Activated CD4-positive, alpha-beta T cell treated with anti-CD3 and anti-CD28 coated beads, Interleukin-2, amount 10 ng/mL, durations not matched to agents 7 days and 5 days (primary cell): ENCODE measurements at regions of chr1 and their contacts with region 1.

Region 1: GRCh38 chr1:214328770-214329469 is 48.0 kb downstream of the SMYD2 start:
- DNase-seq: peak; percentile 83
- H3K4me3 Mint-ChIP-seq: no peak overlapping the region
- H3K27ac Mint-ChIP-seq: no peak overlapping the region
- H3K4me1 Mint-ChIP-seq: peaks cover 9% of the 10 kb centered on the region
- H3K27me3 Mint-ChIP-seq: no peaks in the 10 kb centered on the region

Region 2: DNA sequence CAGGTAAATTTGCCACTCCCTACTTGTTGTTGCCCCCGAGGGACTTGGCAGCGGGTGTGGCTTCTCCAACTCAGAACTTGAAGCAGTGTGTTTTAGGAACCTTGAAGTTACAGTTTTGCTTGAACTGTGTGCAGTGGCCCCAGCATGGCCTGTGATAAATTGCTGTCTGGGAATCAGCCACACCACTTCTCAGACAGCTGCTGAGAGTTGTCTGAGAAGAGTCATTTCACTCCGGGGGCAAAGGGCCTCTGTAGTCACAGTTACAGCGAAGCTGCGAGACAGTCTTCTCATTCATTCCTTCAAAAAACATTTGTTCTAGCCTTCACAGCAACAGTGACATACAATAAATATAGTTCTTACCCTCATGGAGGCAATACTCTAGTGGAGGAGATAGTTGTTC is 270.8 kb before region 1 on chr1:
- CTCF ChIA-PET with region 1: no interaction called
- POLR2A ChIA-PET with region 1: no interaction called
- DNase-seq: no peak
- H3K4me3 Mint-ChIP-seq: no peak overlapping the region
- H3K27ac Mint-ChIP-seq: no peak overlapping the region
- H3K4me1 Mint-ChIP-seq: no peaks in the 10 kb centered on the region
- H3K27me3 Mint-ChIP-seq: no peaks in the 10 kb centered on the region

Region 3: DNA sequence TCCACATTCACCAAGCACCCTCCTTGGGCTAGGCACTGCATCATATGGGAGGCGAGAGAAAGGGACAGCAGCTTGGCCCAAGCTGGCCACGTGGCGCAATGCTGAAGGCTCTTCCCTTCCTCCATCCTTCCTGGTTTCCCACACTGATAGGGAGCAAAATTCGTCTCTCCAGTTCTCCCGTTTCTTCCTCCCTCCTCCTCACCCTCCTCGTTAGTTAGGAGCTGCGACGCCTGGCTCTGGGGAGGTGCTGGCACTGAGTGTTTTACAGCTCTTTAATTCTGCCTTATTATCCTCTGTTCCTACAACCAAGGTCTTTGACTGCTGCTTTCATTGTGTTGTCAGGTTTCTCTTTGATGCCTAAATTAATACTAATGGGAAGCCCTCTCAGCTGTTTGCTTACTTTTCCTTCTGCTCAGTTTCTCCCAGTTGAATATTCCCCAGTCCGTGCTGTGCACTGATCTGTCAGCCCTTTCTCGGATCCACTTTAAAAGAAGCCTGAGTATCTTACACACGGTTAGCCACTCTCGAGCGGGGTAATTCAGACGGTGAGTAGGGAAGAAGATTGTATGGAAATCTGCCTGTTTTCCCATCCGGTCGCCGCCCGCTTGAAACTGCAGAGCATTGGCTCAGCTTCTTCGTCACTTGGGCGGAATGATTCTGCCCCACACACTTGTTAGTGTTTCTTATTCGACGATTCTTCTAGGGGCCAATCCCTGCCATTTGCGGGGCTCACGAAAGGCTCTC is 104.1 kb before region 1 on chr1:
- CTCF ChIA-PET with region 1: no interaction called
- POLR2A ChIA-PET with region 1: no interaction called
- DNase-seq: no peak
- H3K4me3 Mint-ChIP-seq: no peak overlapping the region
- H3K27ac Mint-ChIP-seq: no peak overlapping the region
- H3K4me1 Mint-ChIP-seq: peaks cover 4% of the 10 kb centered on the region
- H3K27me3 Mint-ChIP-seq: peaks cover 36% of the 10 kb centered on the region

Region 4: DNA sequence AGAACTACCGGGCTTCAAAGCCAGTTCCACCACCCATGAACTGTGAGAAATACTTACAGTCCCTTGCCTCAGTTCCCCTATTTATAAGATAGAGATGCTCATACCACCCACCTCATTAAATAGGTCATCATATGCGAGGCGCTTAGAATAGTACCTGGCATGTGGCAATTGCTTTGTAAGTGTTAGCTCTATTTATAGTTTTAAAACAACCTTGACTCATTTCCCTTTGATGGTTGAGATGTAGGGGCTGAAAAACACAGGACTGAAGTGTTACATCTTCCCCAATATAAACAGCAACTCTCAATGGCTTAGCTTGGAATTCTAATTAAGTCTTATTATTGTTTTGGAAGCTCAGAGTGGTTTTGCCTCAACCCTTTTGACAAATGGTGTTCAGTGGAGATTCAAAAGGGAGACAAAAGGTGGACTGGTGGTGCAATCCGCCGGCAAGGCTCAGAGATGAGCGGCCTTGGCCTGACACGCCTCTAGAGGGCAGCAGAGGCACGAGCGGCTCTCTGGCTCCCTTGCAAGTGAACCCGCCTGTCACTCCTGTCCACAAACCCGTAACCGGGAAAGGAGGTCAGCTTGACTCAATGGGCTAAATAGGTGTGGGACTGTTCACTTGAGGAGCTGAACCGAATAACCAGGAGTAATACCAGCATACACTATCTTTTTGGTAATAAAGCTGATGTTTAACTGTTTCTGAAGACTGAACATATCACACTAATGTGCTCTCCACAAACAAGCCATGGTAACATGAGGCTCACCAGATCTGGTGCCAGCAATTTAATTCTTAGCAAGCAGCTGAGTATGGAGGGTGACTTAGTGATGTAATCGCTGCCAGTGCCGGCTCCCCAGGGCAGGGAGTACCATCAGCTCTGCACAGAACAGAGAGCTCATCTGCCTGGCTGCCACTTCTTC is 67.5 kb before region 1 on chr1:
- CTCF ChIA-PET with region 1: interaction called, 145 read pairs
- POLR2A ChIA-PET with region 1: no interaction called
- DNase-seq: peak; percentile 86
- H3K4me3 Mint-ChIP-seq: no peak overlapping the region
- H3K27ac Mint-ChIP-seq: no peak overlapping the region
- H3K4me1 Mint-ChIP-seq: peaks cover 14% of the 10 kb centered on the region
- H3K27me3 Mint-ChIP-seq: peaks cover 57% of the 10 kb centered on the region

Region 5: GRCh38 chr1:214276786-214277345 is 52.1 kb before region 1 on chr1:
- CTCF ChIA-PET with region 1: interaction called, 14 read pairs
- POLR2A ChIA-PET with region 1: no interaction called
- DNase-seq: no peak
- H3K4me3 Mint-ChIP-seq: no peak overlapping the region
- H3K27ac Mint-ChIP-seq: no peak overlapping the region
- H3K4me1 Mint-ChIP-seq: peaks cover 13% of the 10 kb centered on the region
- H3K27me3 Mint-ChIP-seq: peaks cover 13% of the 10 kb centered on the region

Region 6: GRCh38 chr1:214316593-214316992 is 12.3 kb before region 1 on chr1:
- CTCF ChIA-PET with region 1: interaction called, 11 read pairs
- POLR2A ChIA-PET with region 1: no interaction called
- DNase-seq: no peak
- H3K4me3 Mint-ChIP-seq: no peak overlapping the region
- H3K27ac Mint-ChIP-seq: no peak overlapping the region
- H3K4me1 Mint-ChIP-seq: peaks cover 10% of the 10 kb centered on the region
- H3K27me3 Mint-ChIP-seq: no peaks in the 10 kb centered on the region

Region 7: DNA sequence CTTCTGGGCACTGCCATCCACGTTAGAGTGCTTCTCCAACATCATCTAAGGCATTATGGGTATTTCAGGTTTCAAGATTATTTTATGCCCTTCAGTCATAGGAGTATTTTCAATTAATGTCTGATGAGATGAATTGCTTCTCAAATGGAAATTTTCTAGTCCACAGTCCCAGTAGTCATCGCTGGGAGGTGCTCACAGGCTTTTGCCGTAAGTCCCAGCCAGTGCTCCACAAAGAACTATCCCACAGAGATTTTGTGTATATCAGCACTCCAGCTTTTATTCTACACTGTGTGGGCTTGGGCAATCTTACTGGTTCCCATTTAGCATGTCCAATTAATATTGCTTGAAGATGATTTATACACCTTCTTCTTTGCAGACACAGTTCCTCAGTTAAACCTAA is 13.0 kb after region 1 on chr1:
- CTCF ChIA-PET with region 1: interaction called, 20 read pairs
- POLR2A ChIA-PET with region 1: no interaction called
- DNase-seq: no peak
- H3K4me3 Mint-ChIP-seq: no peak overlapping the region
- H3K27ac Mint-ChIP-seq: no peak overlapping the region
- H3K4me1 Mint-ChIP-seq: peaks cover 5% of the 10 kb centered on the region
- H3K27me3 Mint-ChIP-seq: no peaks in the 10 kb centered on the region

Region 8: DNA sequence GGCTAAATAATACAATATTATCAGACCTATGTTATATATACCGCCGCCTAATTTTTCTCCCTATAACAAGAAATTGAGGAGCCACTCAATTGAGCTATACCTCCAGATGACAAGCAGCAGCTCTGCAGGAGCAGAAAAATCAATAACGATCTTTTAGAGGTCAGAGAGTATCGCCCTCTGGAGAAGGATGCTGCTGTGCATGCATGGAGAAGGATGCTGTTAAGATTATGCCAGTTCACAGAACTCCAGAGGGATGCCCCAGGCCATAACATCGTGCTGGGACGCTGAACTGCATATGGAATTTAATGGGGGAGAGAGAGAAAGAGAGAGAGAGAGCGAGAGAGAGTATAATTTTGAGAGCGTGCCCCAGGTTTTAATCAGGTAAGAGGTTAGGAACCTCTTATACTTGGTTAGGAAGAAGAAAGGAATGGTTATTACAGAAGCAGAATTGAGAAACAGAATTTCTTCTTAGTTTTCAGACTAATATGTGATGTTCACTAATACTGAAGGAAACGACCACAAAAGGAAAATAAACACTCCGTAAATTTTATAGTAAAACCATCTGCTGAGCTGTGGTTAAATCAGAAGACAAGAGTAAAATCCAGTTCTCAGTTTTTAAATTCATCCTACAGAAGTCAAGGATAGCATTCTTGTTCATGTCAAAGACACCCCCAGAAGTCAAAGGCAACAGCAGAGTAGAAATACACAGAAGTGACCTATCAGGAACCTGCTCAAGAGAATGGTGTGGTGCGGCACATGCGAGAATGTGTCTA is 63.1 kb after region 1 on chr1:
- CTCF ChIA-PET with region 1: no interaction called
- POLR2A ChIA-PET with region 1: no interaction called
- DNase-seq: no peak
- H3K4me3 Mint-ChIP-seq: no peak overlapping the region
- H3K27ac Mint-ChIP-seq: no peak overlapping the region
- H3K4me1 Mint-ChIP-seq: peaks cover 14% of the 10 kb centered on the region
- H3K27me3 Mint-ChIP-seq: no peaks in the 10 kb centered on the region

Region 9: DNA sequence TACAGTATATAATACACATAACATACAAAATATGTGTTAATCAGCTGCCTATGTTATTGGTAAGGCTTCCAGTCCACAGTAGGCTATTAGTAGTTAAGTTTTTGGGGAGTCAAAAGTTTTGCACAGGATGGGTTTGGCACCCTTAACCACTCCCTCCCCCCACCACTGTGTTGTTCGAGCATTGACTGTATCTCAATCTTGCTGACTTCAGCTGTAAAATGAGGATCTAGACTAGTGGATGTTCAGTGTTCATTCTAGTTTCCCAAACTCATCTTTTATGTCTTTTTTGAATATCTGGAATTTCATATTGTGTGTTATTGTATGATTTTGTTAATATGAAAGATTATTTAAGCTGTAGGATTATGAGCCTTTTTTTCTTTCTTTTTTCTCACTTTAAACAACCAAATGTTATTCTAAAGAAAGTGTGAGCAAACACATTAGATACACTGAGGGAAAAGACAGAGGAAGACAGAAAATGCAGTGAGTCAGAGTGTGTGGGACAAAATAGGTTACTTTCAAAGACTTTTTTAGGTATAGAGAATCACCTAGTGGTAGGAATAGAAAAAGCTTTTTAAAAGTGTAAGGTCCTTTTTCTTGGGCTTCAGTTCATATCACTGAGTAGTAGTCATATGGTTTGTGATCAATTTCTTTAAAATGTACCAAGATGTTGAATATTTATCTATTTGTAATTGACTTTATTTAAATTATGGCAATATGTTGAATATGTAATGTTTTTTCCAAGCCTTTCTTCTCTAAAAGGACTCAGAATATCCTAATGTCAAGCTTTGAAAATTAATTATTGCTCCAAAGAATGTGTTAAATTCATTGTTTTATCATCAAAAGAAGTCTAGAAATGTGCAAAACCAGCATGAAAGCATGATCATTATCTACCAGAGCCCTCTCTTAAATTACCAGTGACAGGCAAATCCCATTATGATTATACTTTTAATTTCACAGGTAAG is 256.2 kb after region 1 on chr1:
- CTCF ChIA-PET with region 1: interaction called, 99 read pairs
- POLR2A ChIA-PET with region 1: no interaction called
- DNase-seq: no peak
- H3K4me3 Mint-ChIP-seq: no peak overlapping the region
- H3K27ac Mint-ChIP-seq: no peak overlapping the region
- H3K4me1 Mint-ChIP-seq: no peaks in the 10 kb centered on the region
- H3K27me3 Mint-ChIP-seq: peaks cover 7% of the 10 kb centered on the region